ENCODE measurements at regions of chr5 and their contacts with region 1.

Region 1: DNA sequence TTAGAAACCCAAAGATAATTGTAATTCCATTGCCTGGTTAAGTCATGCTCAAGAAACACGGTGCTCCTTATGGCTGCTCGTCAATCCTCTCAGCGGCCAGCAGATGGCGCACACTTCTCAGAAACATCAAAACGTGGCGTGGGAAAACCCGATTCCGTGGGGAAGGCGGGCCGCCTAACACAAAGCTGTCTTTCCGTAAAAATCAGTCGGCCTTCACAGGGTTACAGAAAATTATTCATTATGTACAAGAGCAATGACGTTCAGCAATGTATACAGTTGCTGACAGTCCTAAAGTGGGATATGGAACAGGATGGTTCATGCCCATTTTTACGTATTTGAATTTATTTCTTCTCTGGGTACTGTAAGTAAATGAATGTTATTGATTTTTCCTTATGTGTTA is 83.5 kb downstream of the PDE4D start:
- DNase-seq: no peak
- H3K4me3 ChIP-seq: peak overlapping the region; percentile 3; the same call in 1 of the 2 replicates
- CTCF ChIP-seq: peak; percentile 85

Region 2: GRCh38 chr5:59799668-59800346 is 10.2 kb before region 1 on chr5:
- CTCF ChIA-PET with region 1: interaction called, 32 read pairs
- POLR2A ChIA-PET with region 1: no interaction called
- DNase-seq: no peak
- H3K4me3 ChIP-seq: no peak overlapping the region
- CTCF ChIP-seq: peak; percentile 30

Region 3: DNA sequence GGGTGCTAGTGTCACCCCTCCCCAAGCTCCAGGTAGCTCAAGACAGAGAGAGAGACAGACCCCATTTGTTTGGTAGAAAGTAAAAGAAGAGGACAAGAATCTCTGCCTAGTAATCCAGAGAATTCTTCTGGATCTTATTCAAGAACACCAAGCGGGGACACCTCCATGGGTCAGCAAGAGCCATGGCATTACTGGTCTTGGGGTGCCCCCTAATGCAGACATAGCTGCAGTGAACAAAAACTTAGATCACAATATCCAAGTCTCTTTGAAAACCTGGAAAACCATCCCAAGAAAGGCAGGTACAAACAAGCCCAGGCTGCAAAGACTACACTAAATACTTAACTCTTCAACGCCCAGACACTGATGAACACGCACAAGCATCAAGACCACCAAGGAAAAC is 113.4 kb after region 1 on chr5:
- CTCF ChIA-PET with region 1: interaction called, 50 read pairs
- POLR2A ChIA-PET with region 1: no interaction called
- DNase-seq: no peak
- H3K4me3 ChIP-seq: no peak overlapping the region
- CTCF ChIP-seq: peak; percentile 21

Region 4: GRCh38 chr5:60143942-60144549 is 334.0 kb after region 1 on chr5:
- CTCF ChIA-PET with region 1: no interaction called
- POLR2A ChIA-PET with region 1: no interaction called
- DNase-seq: no peak
- H3K4me3 ChIP-seq: no peak overlapping the region
- CTCF ChIP-seq: no peak

Region 5: DNA sequence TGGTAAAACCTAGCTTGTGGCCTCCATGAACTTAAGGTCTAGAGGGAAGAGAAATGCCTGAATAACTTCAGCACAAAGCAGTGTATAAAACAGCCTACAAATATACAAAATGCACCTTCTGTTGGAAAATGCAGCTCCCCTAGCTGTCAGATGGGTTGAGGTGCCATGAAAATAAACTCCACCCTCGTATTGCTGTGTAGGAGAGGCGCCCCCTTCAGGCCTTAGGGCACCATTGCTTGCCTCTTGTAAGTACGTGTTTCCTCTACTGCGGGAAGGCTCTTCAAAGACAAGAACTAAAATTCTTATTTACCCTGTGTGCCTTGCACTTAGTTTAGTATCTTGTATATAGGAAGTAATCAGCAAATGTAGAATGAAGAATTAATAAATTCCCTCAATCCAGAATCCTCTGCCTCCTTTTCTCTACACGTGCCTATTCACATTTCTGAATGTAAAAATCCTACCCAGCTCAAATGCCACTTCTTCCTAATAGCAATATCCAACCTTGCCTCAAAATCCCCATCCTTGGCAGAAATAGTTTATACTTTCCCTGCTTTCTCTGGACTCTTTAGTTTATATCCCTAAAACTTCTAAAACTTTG is 477.2 kb after region 1 on chr5:
- CTCF ChIA-PET with region 1: interaction called, 73 read pairs
- POLR2A ChIA-PET with region 1: no interaction called
- DNase-seq: no peak
- H3K4me3 ChIP-seq: no peak overlapping the region
- CTCF ChIP-seq: peak; percentile 80

Region 6: DNA sequence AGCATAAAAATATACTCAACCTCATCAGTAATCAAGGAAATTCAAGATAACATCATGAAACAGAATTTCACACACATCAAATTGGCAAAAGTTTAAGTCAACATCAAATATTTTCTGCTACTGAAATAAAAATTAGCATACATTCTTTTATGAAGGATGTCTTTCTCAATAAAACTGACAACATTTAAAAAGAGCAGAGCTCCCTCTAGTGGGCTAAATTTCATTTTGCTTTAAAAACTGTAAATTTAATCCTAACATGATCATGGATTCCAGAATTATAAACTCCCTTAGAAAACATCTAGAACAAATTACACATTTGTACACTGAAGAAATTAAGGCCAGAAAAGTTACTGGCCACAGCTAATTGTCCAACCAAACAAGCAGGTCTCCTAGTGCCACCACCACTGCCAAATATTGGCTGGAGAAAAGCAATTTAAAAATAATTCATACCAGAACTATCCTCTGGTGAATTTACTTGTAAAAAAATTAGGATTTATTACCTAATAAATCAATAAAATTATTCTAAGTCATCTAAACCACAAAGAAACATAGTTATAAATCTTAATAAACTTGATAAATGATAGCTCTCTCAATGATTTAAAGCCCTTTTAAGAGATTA is 858.8 kb after region 1 on chr5:
- CTCF ChIA-PET with region 1: interaction called, 49 read pairs
- POLR2A ChIA-PET with region 1: no interaction called
- DNase-seq: no peak
- H3K4me3 ChIP-seq: no peak overlapping the region
- CTCF ChIP-seq: no peak